Mammary epithelial cell (primary cell): ENCODE measurements at regions of chr19 and their contacts with region 1.

Region 1: DNA sequence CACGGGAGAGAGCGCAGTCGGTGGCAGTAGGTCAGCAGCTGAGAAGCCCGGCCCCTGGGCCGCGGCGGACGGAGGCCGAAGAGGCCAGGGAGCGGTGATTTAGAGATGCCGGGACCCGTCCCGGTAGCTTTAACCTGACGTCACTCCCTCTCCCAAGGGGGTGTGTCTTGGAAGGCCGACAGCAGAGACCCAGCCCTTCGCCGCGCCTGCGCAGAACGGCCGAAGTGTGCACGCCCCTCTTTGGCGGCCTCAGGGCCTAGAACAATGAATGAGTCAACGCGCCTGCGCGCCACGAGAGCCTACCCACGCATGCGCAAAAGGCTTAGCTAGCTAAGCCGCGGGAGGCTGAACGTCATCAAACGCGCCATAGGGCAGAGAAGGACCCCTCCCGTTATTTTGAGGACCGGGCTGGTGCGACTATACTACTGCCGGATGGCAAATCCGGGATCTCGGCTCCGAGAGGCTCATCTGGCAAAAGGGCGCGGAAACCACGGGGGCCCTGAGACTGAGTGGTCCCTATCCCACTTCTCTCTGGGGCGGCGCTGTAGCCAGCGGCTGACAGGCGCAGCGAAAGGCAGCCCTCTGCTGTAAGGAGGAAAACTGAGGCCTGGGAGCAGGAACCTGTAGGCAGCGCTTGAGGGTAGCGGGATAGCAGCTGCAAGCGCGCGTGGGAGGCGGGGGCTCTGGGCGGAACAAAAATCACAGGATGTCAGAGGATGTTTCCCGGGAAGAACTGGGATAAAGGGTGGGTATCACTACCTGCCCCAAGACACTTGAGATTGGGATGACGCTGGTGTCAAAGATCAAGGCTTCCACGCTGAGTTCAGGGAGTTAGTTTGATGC is at the starts of genes IRGQ and ZNF576:
- DNase-seq: peak; percentile 99
- H3K4me3 ChIP-seq: peak within 1 kb of the TSS; percentile 58 to 76 (median 67)
- H3K27ac ChIP-seq: peak within 1 kb of the TSS; percentile 94
- H3K4me1 ChIP-seq: peaks cover 23% of the 10 kb centered on the region
- H3K27me3 ChIP-seq: no peaks in the 10 kb centered on the region
- CTCF ChIP-seq: no peak
- total RNA-seq, gene IRGQ: 23.5 to 31.2 TPM
- total RNA-seq, gene ZNF576: 10.3 to 15.5 TPM

Region 2: DNA sequence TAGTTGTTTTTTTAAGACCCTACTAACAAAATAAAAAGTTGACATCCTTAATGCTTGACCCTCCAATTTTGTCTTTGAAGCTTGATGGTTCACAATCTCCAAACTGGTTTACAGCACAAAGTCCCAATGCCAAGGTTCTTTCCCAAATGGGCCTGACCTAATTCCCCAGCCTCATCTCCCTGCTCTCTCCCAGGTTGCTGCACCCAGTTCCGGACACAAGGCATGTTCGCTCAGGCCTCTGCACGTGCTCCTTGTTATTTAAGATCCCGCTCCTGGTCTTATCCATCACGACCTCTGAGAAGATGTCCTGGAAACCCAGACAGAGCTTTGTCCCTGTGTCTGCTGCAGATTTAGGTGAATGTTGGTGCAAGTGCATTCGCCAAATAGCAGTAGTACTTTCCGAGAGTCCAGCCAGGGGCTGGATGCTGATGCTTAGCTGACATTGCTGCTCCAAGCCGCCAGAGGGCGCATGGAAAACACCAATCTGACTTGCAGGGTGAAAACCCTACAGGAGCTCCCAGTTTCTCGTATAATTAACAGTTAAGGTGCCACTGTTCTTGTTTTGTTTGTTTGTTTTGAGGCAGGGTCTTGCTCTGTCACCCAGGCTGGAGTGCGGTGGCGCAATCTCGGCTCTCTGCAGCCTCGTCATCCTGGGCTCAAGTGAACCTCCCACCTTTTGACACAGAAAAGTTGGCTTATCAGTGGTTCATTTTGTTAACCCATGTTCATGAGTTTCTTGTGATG is 149.3 kb before region 1 on chr19:
- CTCF ChIA-PET with region 1: no interaction called
- dilution Hi-C with region 1: no loop called
- in situ Hi-C with region 1: no loop called
- intact Hi-C with region 1: loop called (anchors 2 kb)
- DNase-seq: peak; percentile 62
- H3K4me3 ChIP-seq: no peak overlapping the region
- H3K27ac ChIP-seq: no peak overlapping the region
- H3K4me1 ChIP-seq: peaks cover 4% of the 10 kb centered on the region
- H3K27me3 ChIP-seq: no peaks in the 10 kb centered on the region
- CTCF ChIP-seq: peak; percentile 93 to 97

Region 3: DNA sequence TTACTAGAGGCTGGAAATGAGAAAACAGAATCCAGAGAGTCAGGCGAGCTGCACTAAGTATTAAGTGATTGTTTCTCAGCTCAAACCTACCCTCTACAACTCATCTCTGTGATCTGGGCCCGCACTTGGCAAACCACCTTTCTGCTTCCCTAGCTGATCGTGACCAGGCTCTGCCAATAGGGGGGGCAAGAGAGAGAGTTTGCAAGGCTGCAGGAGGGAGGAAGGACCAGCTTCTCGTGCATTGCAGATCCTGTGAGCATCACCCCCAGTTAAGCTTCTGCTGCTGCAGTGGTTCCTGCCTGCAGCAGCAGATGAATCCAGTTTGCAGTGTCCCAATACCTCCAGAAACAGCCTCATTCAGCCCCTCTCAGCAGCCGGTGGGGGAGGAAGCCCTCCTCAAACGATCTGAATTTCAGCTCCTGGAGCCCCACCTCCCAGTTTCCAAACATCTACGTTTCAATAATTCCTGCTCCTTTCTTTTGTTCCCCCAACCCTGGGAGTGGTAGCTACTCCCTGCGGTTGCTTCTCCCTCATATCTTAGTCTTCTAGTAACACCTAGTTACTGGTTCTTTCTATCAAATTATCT is 40.9 kb before region 1 on chr19:
- CTCF ChIA-PET with region 1: no interaction called
- dilution Hi-C with region 1: no loop called
- in situ Hi-C with region 1: no loop called
- intact Hi-C with region 1: loop called (anchors 1 kb)
- DNase-seq: peak; percentile 53
- H3K4me3 ChIP-seq: no peak overlapping the region
- H3K27ac ChIP-seq: no peak overlapping the region
- H3K4me1 ChIP-seq: no peaks in the 10 kb centered on the region
- H3K27me3 ChIP-seq: no peaks in the 10 kb centered on the region
- CTCF ChIP-seq: peak; percentile 84 to 95

Region 4: DNA sequence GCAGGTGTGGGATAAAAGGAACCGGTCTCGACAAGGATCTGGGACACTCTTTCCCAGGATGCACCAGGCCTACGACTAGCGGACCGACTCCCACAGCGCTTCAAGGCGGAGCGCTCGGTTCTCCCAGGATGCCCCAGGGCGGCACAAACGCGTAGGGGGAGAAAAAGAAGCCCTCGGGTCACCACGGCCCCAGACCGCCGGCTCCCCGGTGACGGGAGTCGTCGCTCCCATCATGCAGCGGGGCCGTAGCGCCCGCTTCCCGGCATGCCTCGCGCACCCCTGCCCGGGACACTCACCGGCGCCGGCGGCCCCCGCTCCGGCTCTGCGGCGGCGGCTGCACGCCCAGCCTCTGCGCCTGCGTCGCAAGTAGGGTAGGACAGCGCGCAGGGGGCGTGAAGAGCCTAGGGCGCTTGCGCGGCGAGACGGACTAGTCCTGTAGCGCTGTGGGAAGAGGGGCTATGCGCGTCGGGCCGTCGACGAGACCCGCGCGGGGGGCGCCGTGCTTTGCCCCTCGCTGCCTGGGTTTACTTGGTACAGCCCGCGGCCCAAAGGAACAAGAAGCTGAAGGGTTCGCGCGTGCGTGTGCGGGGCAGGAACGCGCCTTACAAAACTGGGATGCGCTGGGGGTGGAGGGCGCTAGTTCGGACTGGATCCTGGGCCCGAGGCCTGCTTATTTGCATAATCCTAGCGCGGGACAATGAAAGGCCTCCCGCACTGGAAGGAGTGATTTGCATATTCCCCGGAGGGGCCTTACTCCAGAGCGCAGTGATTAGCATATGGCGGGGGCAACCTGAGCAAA is 23.2 kb after region 1 on chr19 and contains the start of gene ZNF428:
- CTCF ChIA-PET with region 1: no interaction called
- dilution Hi-C with region 1: no loop called
- in situ Hi-C with region 1: no loop called
- intact Hi-C with region 1: loop called (anchors 1 kb)
- DNase-seq: peak; percentile 76
- H3K4me3 ChIP-seq: peak within 1 kb of the TSS; percentile 41 to 84 (median 61)
- H3K27ac ChIP-seq: peak within 1 kb of the TSS; percentile 47
- H3K4me1 ChIP-seq: peaks cover 6% of the 10 kb centered on the region
- H3K27me3 ChIP-seq: no peaks in the 10 kb centered on the region
- CTCF ChIP-seq: no peak
- total RNA-seq, gene ZNF428: 17.0 to 19.0 TPM

Region 5: GRCh38 chr19:43651758-43652545 is 55.7 kb after region 1 on chr19:
- CTCF ChIA-PET with region 1: no interaction called
- dilution Hi-C with region 1: no loop called
- in situ Hi-C with region 1: no loop called
- intact Hi-C with region 1: loop called (anchors 1 kb)
- DNase-seq: no peak
- H3K4me3 ChIP-seq: no peak overlapping the region
- H3K27ac ChIP-seq: no peak overlapping the region
- H3K4me1 ChIP-seq: no peaks in the 10 kb centered on the region
- H3K27me3 ChIP-seq: no peaks in the 10 kb centered on the region
- CTCF ChIP-seq: peak; percentile 71 to 90

Region 6: DNA sequence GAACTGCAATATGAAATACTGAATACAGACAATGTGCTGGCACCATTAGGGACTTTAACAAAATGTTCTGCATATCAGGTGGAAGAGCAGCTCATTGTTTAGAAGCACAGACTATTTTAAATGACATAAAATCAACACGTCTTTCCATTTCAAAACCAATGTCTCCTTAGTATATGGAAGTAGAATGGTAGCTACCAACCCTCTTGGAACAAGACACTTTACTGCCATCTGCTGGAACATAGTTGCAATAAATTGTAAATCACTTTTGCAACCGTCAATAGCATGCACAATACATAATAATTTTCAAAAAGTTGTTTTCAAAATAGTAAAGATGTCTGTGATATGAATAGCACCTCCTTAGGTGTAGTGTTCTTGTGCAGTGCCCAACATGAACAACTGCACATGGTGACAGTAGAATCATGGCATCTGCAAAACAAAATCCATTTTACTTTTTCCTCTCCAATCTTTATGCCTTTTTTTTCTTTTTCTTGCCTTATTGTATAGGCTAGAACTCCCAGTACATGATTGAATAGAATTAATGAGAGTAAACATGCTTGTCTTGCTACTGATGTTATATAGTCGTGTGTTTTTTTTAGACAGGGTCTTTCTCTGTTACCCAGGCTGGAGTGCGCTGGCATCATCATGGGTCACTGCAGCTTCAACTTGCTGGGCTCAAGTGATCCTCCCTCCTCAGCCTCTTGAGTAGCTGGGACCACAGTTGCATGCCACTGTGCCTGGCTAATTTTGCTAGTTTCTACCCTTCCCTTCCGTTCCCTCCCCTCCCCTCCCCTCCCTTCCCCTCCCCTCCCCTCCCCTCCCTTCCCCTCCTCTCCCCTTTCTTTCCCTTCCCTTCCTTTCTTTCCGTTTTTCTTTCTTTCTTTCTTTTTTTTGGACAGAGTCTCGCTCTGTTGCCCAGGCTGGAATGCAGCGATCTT is 213.8 kb after region 1 on chr19:
- CTCF ChIA-PET with region 1: no interaction called
- dilution Hi-C with region 1: no loop called
- in situ Hi-C with region 1: no loop called
- intact Hi-C with region 1: loop called (anchors 5 kb)
- DNase-seq: peak; percentile 60
- H3K4me3 ChIP-seq: no peak overlapping the region
- H3K27ac ChIP-seq: no peak overlapping the region
- H3K4me1 ChIP-seq: peaks cover 19% of the 10 kb centered on the region
- H3K27me3 ChIP-seq: no peaks in the 10 kb centered on the region
- CTCF ChIP-seq: peak; percentile 45 to 69